Activated CD4-positive, alpha-beta T cell treated with anti-CD3 and anti-CD28 coated beads, Interleukin-2, amount 10 ng/mL, durations not matched to agents 24 days and 14 days (primary cell): ENCODE measurements at regions of chr18 and their contacts with region 1.

Region 1: DNA sequence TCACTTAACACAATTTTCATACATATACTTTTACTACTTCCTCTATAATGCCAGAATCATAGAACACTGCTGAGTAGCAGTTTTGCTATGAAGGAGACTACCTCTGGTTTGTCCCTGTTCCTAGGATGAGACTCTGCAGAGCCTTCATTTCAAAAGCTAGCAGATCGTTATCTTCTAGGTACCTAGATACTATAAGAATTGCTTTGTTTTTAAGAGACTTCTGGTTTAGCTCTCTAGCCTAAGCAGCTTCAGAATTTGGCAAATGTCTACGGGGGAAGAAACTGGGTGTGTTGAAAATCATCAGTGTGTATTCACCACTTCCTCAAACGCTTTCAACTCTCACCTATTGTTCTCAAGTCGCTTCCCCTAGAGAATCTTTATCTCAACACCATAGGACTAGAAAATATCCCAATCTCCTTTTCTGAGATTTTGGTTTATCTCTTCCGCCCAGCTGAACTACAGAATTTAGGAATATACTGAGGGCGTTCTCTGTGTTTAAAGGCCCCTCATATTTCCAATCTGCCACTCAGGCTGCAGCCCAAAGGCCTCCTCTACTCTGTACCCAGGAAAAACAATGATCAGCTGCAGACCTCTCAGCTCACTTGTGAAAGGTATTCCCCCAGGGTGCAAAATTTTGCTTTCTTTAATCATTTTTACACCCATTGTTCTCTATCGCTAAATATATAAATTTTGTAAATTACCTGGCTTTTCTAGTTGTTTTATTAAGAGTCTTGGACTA is 28.7 kb downstream of the SMAD2 start:
- DNase-seq: peak; percentile 82
- H3K4me3 Mint-ChIP-seq: peak overlapping the region; percentile 51
- H3K27ac Mint-ChIP-seq: peak overlapping the region; percentile 97
- H3K4me1 Mint-ChIP-seq: peaks cover 74% of the 10 kb centered on the region
- H3K27me3 Mint-ChIP-seq: no peaks in the 10 kb centered on the region

Region 2: DNA sequence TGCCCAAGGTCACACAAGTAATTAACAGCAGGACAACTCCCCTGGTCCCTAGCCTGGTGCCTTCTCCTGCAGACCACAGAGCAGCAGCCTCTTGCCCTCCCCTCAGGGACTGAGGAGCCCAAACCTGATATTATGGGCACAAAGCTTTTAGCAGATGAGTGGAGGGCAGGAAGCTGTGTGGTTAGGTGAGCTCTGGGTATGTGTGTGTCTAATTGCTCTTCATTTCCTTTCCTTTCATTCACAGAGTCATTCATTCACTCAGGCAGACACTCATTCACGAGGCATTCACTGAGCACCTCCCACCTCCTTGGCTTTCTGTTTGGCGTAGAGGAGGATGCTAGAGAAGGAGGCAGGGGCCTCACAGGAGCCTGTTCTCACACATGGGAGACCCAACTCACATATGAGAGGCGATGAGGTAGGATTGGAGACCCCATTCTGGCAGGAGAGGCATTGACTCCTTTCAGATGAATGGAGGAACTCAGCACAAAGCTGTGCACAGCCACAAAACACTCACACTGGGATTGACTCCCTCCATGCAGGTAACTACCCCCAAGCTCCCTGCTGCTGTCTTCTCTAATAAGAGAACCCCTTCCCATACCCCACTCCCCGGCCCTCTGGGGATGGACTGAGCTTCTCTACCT is 343.6 kb before region 1 on chr18:
- intact Hi-C with region 1: no loop called
- DNase-seq: no peak
- H3K4me3 Mint-ChIP-seq: no peak overlapping the region
- H3K27ac Mint-ChIP-seq: no peak overlapping the region
- H3K4me1 Mint-ChIP-seq: peaks cover 3% of the 10 kb centered on the region
- H3K27me3 Mint-ChIP-seq: peaks cover 14% of the 10 kb centered on the region

Region 3: DNA sequence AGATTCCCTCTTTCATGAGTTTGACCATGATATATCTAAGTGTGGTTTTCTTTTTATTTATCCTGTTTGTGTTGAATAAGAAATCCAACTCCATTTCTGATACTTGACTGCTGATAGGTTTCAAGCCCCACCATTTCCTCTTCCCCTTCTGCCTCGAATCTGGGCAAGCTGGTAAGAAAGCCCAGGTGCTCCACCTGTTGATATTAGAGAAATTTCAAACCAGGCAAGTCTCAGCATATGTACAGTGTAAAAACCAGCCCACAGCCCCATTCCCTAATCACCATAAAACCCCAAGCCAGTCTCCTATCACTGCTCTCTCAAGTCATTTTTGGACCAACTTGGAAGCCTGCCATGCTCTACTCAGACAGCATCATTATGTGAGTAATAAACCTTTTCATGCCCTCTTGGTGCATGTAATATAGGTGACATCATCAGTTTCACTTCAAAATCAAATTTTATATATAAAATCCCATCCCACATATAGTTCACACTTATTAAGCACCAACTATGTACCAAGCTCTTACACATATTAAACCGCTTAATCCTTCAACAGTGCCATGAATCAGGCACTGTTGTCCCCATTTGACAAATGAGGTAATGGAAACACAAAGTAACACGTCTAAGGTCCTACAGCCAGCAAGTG is 17.9 kb before region 1 on chr18:
- intact Hi-C with region 1: loop called (anchors 2 kb)
- DNase-seq: no peak
- H3K4me3 Mint-ChIP-seq: no peak overlapping the region
- H3K27ac Mint-ChIP-seq: peak overlapping the region; percentile 63
- H3K4me1 Mint-ChIP-seq: peaks cover 37% of the 10 kb centered on the region
- H3K27me3 Mint-ChIP-seq: no peaks in the 10 kb centered on the region

Region 4: DNA sequence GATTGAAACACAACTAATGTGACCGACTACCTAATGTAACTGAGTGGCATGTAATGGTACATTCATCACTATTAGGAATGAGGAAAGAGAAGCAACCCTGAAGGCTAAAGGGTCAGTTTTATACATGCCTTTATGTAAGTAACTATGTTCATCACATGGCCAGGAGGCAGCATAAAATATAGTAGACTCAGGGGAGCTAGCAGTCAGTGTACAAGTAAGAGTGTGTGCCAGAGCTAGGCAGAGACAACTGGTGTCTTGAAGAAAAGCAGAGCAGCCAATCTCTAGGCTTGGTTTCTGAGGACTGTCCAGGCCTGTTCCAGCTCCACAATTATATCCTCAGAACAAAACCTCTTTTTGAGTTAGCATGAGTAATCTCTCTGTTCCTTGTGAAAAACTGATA is 10.6 kb after region 1 on chr18:
- intact Hi-C with region 1: loop called (anchors 1 kb)
- DNase-seq: peak; percentile 58
- H3K4me3 Mint-ChIP-seq: peak overlapping the region; percentile 64
- H3K27ac Mint-ChIP-seq: peak overlapping the region; percentile 93
- H3K4me1 Mint-ChIP-seq: peaks cover 65% of the 10 kb centered on the region
- H3K27me3 Mint-ChIP-seq: no peaks in the 10 kb centered on the region

Region 5: GRCh38 chr18:47917923-47918610 is 16.3 kb after region 1 on chr18:
- intact Hi-C with region 1: loop called (anchors 1 kb)
- DNase-seq: peak; percentile 67
- H3K4me3 Mint-ChIP-seq: peak overlapping the region; percentile 77
- H3K27ac Mint-ChIP-seq: peak overlapping the region; percentile 95
- H3K4me1 Mint-ChIP-seq: peaks cover 75% of the 10 kb centered on the region
- H3K27me3 Mint-ChIP-seq: no peaks in the 10 kb centered on the region